GM12878 (cell line): ENCODE measurements at regions of chrX and their contacts with region 1.

Region 1: DNA sequence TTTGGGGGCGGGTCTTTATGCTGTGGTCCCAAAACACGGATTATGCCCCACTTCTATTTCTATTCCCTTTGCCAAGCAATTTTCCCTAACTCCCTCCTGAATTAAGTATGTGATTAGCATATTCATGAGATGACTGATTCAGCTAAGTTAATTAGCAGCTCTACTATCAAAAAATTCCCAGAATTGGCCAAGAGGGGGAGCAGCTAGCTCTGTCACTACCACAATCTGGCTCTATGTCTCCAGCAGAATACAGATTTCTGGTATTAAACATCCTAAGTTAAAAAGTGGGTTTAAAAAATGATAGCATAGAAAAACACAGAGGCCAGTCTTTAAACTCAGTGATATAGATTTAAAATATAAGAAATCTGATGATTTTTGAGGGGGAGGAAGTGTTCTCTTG is 80.3 kb downstream of the GPC4 start:
- DNase-seq: no peak
- ATAC-seq: peak; percentile 56; the same call in 2 of the 3 replicates
- H3K4me3 ChIP-seq: no peak overlapping the region
- H3K27ac ChIP-seq: no peak overlapping the region
- H3K4me1 ChIP-seq: no peaks in the 10 kb centered on the region
- H3K27me3 ChIP-seq: no peaks in the 10 kb centered on the region
- CTCF ChIP-seq: peak; percentile 46 to 51 (median 49); a peak in 5 of 6 replicates
- EP300 ChIP-seq: no peak
- POLR2A ChIP-seq: no peak
- RAD21 ChIP-seq: peak; percentile 40

Region 2: GRCh38 chrX:133090236-133090809 is 244.7 kb before region 1 on chrX:
- CTCF ChIA-PET with region 1: no interaction called
- POLR2A ChIA-PET with region 1: no interaction called
- RAD21 ChIA-PET with region 1: no interaction called
- SMC1A ChIA-PET with region 1: no interaction called
- in situ Hi-C with region 1: no loop called
- intact Hi-C with region 1: no loop called
- DNase-seq: no peak
- ATAC-seq: no peak
- H3K4me3 ChIP-seq: no peak overlapping the region
- H3K27ac ChIP-seq: no peak overlapping the region
- H3K4me1 ChIP-seq: no peaks in the 10 kb centered on the region
- H3K27me3 ChIP-seq: no peaks in the 10 kb centered on the region
- CTCF ChIP-seq: no peak
- EP300 ChIP-seq: no peak
- POLR2A ChIP-seq: no peak
- RAD21 ChIP-seq: no peak

Region 3: GRCh38 chrX:133285341-133285740 is 49.7 kb before region 1 on chrX:
- CTCF ChIA-PET with region 1: no interaction called
- POLR2A ChIA-PET with region 1: no interaction called
- RAD21 ChIA-PET with region 1: no interaction called
- SMC1A ChIA-PET with region 1: no interaction called
- in situ Hi-C with region 1: no loop called
- intact Hi-C with region 1: no loop called
- DNase-seq: no peak
- ATAC-seq: no peak
- H3K4me3 ChIP-seq: no peak overlapping the region
- H3K27ac ChIP-seq: no peak overlapping the region
- H3K4me1 ChIP-seq: no peaks in the 10 kb centered on the region
- H3K27me3 ChIP-seq: no peaks in the 10 kb centered on the region
- CTCF ChIP-seq: no peak
- EP300 ChIP-seq: no peak
- POLR2A ChIP-seq: no peak
- RAD21 ChIP-seq: no peak

Region 4: DNA sequence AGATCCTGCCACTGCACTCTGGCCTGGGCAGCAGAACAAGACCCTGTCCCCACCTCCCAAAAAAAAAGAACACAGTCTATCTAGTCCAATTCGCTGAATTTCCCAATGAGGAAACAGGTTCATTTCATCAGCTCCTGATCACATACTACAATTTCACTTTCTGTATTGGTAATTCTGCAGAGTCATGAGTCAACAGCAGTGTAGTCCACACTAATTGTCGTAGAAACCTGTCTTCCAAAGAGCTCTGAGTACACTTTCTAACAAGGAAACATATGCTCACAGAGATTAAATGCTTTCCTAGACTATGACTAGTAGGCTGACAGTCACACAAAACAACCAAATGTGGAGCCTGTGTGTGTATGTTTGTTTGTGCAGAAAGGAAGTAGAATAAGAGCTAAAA is 11.6 kb before region 1 on chrX:
- CTCF ChIA-PET with region 1: interaction called, 23 read pairs
- POLR2A ChIA-PET with region 1: interaction called, 3 read pairs
- RAD21 ChIA-PET with region 1: interaction called, 10 read pairs
- SMC1A ChIA-PET with region 1: interaction called, 36 read pairs
- in situ Hi-C with region 1: no loop called
- intact Hi-C with region 1: no loop called
- DNase-seq: no peak
- ATAC-seq: peak; percentile 64
- H3K4me3 ChIP-seq: no peak overlapping the region
- H3K27ac ChIP-seq: no peak overlapping the region
- H3K4me1 ChIP-seq: no peaks in the 10 kb centered on the region
- H3K27me3 ChIP-seq: no peaks in the 10 kb centered on the region
- CTCF ChIP-seq: no peak
- EP300 ChIP-seq: no peak
- POLR2A ChIP-seq: no peak
- RAD21 ChIP-seq: no peak

Region 5: DNA sequence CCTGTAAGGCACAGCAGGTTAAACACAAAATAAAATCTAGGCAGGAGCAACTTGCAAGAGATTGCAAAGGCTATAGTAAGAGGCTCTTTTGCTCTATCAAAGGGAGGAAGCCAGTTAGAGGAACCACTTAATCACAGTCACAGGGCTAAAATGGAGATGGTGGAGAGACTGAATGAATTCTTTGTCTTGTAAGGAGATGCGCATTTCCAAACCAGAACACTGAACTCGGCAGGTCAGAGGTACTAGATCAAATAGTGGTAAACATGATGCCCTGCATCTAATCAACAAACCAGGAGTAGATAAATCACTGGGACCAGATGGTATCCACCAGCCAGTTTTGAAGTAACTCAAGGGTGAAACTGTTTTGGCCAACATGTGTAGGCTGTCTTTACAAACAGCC is 24.4 kb after region 1 on chrX:
- CTCF ChIA-PET with region 1: interaction called, 7 read pairs
- POLR2A ChIA-PET with region 1: no interaction called
- RAD21 ChIA-PET with region 1: interaction called, 6 read pairs
- SMC1A ChIA-PET with region 1: interaction called, 11 read pairs
- in situ Hi-C with region 1: no loop called
- intact Hi-C with region 1: no loop called
- DNase-seq: no peak
- ATAC-seq: no peak
- H3K4me3 ChIP-seq: no peak overlapping the region
- H3K27ac ChIP-seq: no peak overlapping the region
- H3K4me1 ChIP-seq: no peaks in the 10 kb centered on the region
- H3K27me3 ChIP-seq: no peaks in the 10 kb centered on the region
- CTCF ChIP-seq: no peak
- EP300 ChIP-seq: no peak
- POLR2A ChIP-seq: no peak
- RAD21 ChIP-seq: no peak

Region 6: DNA sequence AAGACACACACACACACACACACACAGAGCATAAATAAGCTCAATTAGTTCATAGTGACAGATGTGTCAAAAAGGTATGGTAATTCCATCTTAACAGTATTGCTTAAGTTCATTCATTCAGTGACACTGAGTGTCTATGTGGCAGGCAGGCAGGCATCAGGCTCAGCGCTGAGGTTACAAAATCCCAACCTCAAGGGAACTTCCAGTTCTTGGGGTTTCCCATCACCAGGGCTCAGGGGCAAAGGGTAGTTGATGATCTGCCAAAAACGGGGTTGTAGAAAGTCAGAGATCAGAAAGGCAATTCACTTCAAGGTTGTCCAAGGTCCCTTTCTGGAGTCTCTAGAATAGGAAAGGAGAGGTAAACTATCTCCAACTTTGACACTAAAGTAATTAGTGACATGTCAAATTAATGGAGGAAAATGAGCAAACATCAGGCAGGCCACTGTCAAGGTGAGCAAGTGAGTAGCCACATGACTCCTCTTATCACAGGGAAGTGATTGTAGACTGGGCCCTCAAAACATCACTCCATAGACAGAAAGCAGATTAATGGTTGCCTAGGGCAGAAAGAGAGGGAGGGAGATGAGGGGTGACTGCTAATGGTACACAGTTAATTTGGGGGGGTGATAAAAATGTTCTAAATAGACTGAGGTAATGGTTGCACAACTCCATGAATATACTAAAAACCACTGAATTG is 38.5 kb after region 1 on chrX:
- CTCF ChIA-PET with region 1: interaction called, 3 read pairs
- POLR2A ChIA-PET with region 1: interaction called, 5 read pairs
- RAD21 ChIA-PET with region 1: interaction called, 3 read pairs
- SMC1A ChIA-PET with region 1: interaction called, 12 read pairs
- in situ Hi-C with region 1: no loop called
- intact Hi-C with region 1: no loop called
- DNase-seq: no peak
- ATAC-seq: peak; percentile 79
- H3K4me3 ChIP-seq: no peak overlapping the region
- H3K27ac ChIP-seq: no peak overlapping the region
- H3K4me1 ChIP-seq: no peaks in the 10 kb centered on the region
- H3K27me3 ChIP-seq: no peaks in the 10 kb centered on the region
- CTCF ChIP-seq: no peak
- EP300 ChIP-seq: 0 out of 4 replicates have a peak, but pooled peaks of 1 of the 2 experiments have one; percentile 28
- POLR2A ChIP-seq: no peak
- RAD21 ChIP-seq: no peak

Region 7: GRCh38 chrX:133415276-133416105 is 80.5 kb after region 1 on chrX and contains the start of gene GPC4:
- CTCF ChIA-PET with region 1: interaction called, 12 read pairs
- POLR2A ChIA-PET with region 1: no interaction called
- RAD21 ChIA-PET with region 1: interaction called, 8 read pairs
- SMC1A ChIA-PET with region 1: interaction called, 6 read pairs
- in situ Hi-C with region 1: no loop called
- intact Hi-C with region 1: no loop called
- DNase-seq: no peak
- ATAC-seq: peak; percentile 50
- H3K4me3 ChIP-seq: no peak within 1 kb of the TSS
- H3K27ac ChIP-seq: no peak within 1 kb of the TSS
- H3K4me1 ChIP-seq: no peaks in the 10 kb centered on the region
- H3K27me3 ChIP-seq: no peaks in the 10 kb centered on the region
- CTCF ChIP-seq: no peak
- EP300 ChIP-seq: no peak
- POLR2A ChIP-seq: no peak
- RAD21 ChIP-seq: no peak
- polyA plus RNA-seq, gene GPC4: 0.04 to 0.08 TPM